SK-N-SH (cell line): ENCODE measurements at regions of chr15 and their contacts with region 1.

Region 1: DNA sequence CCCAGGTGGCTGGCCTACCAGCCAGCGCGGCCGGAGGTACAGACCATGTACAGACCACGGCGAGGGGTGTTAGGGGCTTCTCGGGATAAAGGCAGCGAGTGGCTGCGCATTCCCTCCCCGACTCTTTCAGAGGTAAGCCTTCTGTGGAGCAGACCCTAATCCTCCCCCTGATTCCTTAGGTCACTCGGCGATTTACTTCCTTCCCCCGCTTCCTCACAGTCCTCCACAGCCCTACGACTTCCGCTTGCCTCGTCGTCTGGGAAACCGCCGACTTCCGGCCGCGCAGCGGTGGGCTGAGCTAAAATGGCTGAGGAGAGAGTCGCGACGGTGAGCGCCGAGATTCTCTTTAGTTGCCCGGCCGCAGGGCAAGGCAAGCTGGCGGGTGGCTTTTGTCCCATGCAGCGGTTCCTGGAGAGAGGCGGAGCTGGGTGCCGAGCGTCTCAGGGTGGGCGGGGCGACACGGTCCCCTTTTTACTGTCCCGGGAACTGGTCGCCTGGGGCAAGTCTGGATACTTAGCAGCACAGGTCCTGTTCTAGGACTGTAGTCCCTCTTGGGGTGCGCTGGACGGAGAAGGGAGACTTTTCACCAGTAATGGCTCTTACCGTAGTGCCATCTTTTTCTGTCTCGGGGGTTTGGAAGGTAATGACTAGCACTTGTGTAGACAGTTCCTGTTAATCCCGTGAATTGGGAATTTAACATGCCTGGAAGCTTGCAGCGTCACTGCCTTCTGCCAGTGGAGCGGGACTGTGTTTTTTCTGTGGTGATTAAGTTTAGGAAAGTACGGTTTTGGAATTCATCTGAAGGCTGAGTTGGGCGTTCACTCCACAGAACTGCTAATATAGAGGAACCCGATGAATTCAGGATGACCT is at the starts of genes BBS4 and HIGD2B:
- DNase-seq: peak; percentile 81
- H3K4me3 ChIP-seq: peak within 1 kb of the TSS; percentile 70 to 77
- H3K27ac ChIP-seq: peak within 1 kb of the TSS; percentile 87 to 93
- H3K4me1 ChIP-seq: peaks cover 3 to 5% of the 10 kb centered on the region in 2 experiments; a peak in 3 of 4 replicates
- H3K27me3 ChIP-seq: no peaks in the 10 kb centered on the region; the same call in 1 of the 2 replicates
- CTCF ChIP-seq: no peak
- EP300 ChIP-seq: no peak
- RAD21 ChIP-seq: no peak
- polyA plus RNA-seq, gene BBS4: 18.5 and 27.8 TPM in 2 replicates
- polyA plus RNA-seq, gene HIGD2B: not detected in 2 replicates

Region 2: GRCh38 chr15:72671535-72671934 is 14.6 kb before region 1 on chr15:
- CTCF ChIA-PET with region 1: interaction called, 10 read pairs
- POLR2A ChIA-PET with region 1: interaction called, 5 read pairs
- DNase-seq: no peak
- H3K4me3 ChIP-seq: no peak overlapping the region
- H3K27ac ChIP-seq: no peak overlapping the region
- H3K4me1 ChIP-seq: peaks cover 0 to 3% of the 10 kb centered on the region in 2 experiments; a peak in 1 of 4 replicates
- H3K27me3 ChIP-seq: peaks cover 11% of the 10 kb centered on the region; the same call in 1 of the 2 replicates
- CTCF ChIP-seq: no peak
- EP300 ChIP-seq: no peak
- RAD21 ChIP-seq: no peak

Region 3: DNA sequence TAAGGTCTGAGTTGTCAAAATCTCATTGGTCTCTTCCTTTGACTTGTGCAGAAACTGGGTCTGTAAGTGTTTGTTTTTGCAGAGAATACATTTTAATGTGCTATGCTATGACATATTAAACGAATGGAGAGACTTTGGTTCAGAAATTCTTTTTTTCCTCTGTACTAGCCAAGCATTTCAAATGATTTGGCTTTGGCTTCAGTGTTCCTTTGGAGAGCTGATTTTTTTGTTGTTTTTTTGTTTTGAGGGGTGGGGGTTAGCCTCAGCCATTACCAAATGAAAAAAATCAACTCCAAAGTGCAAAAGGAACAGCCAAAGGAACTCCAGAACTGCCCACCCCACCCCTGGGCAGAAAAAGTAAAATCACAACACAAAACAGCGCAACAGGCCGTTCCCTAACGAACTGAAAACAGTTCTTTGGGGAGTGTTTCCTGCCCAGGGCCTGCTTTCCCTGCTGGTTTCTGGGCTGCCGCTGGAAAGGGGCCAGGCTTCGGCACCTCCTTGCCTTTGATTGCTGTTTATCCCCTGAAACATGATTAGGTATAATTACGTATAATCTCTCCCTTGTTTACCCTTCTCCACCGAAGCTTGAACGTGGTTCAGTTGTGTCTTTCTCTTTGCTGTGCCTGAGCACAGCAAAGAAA is 308.5 kb after region 1 on chr15:
- CTCF ChIA-PET with region 1: no interaction called
- POLR2A ChIA-PET with region 1: no interaction called
- DNase-seq: no peak
- H3K4me3 ChIP-seq: no peak overlapping the region
- H3K27ac ChIP-seq: no peak overlapping the region
- H3K4me1 ChIP-seq: 0 out of 4 replicates have a peak, but pooled peaks cover 0 to 9% of the 10 kb centered on the region in 2 experiments
- H3K27me3 ChIP-seq: no peaks in the 10 kb centered on the region; the same call in 1 of the 2 replicates
- CTCF ChIP-seq: no peak
- EP300 ChIP-seq: no peak
- RAD21 ChIP-seq: no peak